ENCODE measurements at regions of chrX and their contacts with region 1.

Region 1: GRCh38 chrX:56248492-56248891 is 16.3 kb downstream of the KLF8 start:
- DNase-seq: peak; percentile 53
- CTCF ChIP-seq: peak; percentile 54

Region 2: GRCh38 chrX:56232221-56233082 is 16.0 kb before region 1 on chrX and contains the start of gene KLF8:
- CTCF ChIA-PET with region 1: interaction called, 33 read pairs
- POLR2A ChIA-PET with region 1: no interaction called
- DNase-seq: peak; percentile 56
- CTCF ChIP-seq: no peak

Region 3: DNA sequence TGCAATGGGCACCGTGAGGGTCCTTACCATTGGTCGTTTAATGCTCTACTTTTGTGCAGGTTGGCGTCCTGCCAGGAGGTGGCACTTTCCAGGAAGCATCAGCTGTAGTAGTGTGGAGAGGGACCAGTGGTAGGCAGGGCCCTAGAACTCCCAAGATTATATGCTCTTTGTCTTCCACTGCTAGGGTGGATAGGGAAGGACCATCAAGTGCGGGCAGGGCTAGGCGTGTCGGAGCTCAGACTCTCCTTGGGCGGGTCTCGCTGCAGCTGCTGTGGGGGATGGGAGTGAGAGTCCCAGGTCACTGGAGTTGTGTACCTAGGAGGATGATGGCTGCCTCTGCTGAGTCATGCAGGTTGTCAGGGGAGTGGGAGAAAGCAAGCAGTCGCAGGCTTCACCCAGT is 118.4 kb after region 1 on chrX:
- CTCF ChIA-PET with region 1: no interaction called
- POLR2A ChIA-PET with region 1: no interaction called
- DNase-seq: no peak
- CTCF ChIP-seq: no peak